ENCODE measurements at regions of chr1 and their contacts with region 1.

Region 1: GRCh38 chr1:115764541-115764940 is 4.0 kb downstream of the CASQ2 start:
- DNase-seq: no peak
- CTCF ChIP-seq: no peak

Region 2: DNA sequence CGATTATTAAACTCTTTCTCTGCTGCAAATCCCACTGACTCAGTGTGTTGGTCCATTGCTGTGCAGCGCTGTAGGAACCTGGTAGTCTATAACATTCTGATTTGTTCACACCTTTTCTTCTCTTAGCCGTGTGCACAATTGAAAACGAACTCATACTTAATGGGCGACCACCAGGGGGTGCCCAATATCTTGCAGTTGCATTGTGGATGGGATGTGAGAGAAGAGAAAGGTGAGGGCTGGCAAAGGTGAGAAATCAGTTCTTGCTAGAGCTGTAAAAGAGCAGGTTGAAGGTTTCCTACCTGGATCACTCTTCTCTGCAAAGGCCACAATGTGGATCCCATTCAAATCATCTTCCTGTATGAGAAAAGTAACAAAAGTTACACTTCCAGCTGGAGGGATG is 47.0 kb before region 1 on chr1:
- in situ Hi-C with region 1: loop called (anchors 10 kb)
- DNase-seq: peak; percentile 21
- CTCF ChIP-seq: peak; percentile 15

Measured in GM13976 (cell line).